HepG2 (cell line): ENCODE measurements at regions of chr3 and their contacts with region 1.

Region 1: DNA sequence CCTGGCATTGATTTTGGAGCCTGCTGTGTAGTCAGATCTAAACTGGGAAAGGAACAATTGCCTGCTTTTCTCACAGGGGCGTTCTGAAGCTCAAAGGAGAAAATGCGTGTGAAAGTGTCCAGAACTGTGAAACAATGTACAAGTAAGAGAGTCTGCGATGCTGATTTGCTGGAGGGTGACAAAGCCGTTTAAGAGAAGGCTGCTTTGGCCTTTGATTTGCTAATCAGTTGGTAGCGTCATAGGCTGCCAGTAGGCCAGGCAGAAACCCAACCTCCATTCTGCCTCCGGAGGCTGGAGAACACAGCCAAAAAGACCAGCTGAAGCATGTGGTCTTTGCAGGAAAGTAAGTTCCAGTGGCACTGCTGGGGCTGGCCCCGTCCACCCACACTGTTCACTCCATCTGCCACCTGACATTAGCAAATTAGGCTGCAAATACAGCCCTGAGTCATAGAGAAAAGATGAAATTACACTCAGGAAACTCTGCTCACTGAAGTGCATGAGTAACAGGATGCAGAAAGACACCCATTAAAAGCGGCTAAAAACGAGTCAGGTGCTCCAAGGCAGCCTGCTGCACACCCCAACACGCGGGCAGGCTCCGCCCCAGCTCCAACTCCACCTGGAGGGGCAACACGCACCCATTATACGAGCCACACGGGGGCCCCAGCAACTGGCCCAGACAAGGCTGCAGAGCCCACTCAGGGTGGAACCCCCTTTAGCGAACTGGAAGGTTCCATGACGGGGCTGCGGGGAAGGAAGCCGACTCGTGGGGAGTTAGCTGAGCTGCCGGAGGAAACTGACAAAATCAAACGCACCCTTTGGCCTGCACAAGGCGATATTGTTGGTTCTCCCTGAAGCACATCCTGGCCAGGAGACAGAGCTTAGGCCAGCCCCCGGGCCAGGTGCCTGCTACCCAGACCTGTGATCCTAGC is 31.6 kb downstream of the ZDHHC19 start:
- DNase-seq: no peak
- ATAC-seq: peak; percentile 20
- H3K4me3 ChIP-seq: 0 out of 6 replicates have a peak overlapping the region, but pooled peaks of 1 of the 3 experiments have one; percentile 2
- H3K27ac ChIP-seq: no peak overlapping the region
- H3K4me1 ChIP-seq: peaks cover 26% of the 10 kb centered on the region
- H3K27me3 ChIP-seq: peaks cover 1 to 16% of the 10 kb centered on the region in 2 experiments; a peak in 2 of 5 replicates
- CTCF ChIP-seq: peak; percentile 16; the same call in 1 of the 2 replicates
- EP300 ChIP-seq: no peak
- POLR2A ChIP-seq: no peak
- RAD21 ChIP-seq: no peak

Region 2: DNA sequence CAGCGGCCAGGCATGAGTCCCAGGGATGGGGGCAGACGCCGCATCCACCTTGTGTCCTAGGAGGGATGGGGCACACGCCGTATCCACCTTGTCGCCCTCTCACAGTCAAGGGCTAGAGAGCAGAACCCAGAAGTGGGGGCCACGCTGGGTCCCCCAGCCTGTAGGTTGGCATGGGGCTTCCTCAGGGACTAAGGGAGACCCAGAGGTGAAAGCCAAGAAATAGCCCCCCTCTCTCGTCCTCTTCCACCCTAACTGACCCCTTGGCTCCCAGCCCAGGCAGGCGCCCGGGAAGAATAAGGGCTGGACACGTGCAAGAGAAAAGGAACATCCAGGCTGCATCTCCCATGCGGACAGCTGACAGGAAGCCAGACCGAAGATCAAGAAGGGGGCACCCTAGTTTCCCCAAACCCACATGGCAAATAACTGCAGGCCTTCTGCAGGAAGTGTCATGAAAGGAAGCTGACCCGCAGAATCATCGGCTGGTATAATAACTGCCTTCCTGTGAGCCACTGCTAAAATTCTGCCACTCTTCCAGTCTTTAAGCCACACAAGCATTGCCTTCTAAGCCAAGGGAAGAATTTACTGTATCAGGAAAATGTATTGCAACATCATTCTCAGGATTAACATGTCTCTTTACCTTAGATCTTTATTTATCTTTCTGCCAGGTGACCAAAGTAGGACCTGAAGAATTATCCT is 59.2 kb before region 1 on chr3:
- CTCF ChIA-PET with region 1: no interaction called
- POLR2A ChIA-PET with region 1: no interaction called
- in situ Hi-C with region 1: no loop called
- intact Hi-C with region 1: loop called (anchors 10 kb)
- DNase-seq: no peak
- ATAC-seq: peak; percentile 21; the same call in 2 of the 3 replicates
- H3K4me3 ChIP-seq: no peak overlapping the region
- H3K27ac ChIP-seq: no peak overlapping the region
- H3K4me1 ChIP-seq: peaks cover 32% of the 10 kb centered on the region
- H3K27me3 ChIP-seq: peaks cover 0 to 5% of the 10 kb centered on the region in 2 experiments; a peak in 2 of 5 replicates
- CTCF ChIP-seq: no peak
- EP300 ChIP-seq: no peak
- POLR2A ChIP-seq: no peak
- RAD21 ChIP-seq: no peak